ENCODE measurements at regions of chr14 and their contacts with region 1.

Region 1: GRCh38 chr14:73728717-73729330 is 14.6 kb upstream of the PNMA1 start:
- DNase-seq: peak; percentile 66 to 87
- H3K4me3 ChIP-seq: no peak overlapping the region
- H3K27ac ChIP-seq: 0 out of 2 replicates have a peak overlapping the region, but pooled peaks have one; percentile 30
- H3K4me1 ChIP-seq: peaks cover 56% of the 10 kb centered on the region
- H3K27me3 ChIP-seq: no peaks in the 10 kb centered on the region
- CTCF ChIP-seq: peak; percentile 94

Region 2: GRCh38 chr14:73173092-73173735 is 555.6 kb before region 1 on chr14:
- CTCF ChIA-PET with region 1: no interaction called
- POLR2A ChIA-PET with region 1: no interaction called
- intact Hi-C with region 1: loop called (anchors 5 kb)
- DNase-seq: no peak
- H3K4me3 ChIP-seq: no peak overlapping the region
- H3K27ac ChIP-seq: no peak overlapping the region
- H3K4me1 ChIP-seq: no peaks in the 10 kb centered on the region
- H3K27me3 ChIP-seq: no peaks in the 10 kb centered on the region
- CTCF ChIP-seq: peak; percentile 70

Region 3: GRCh38 chr14:73524493-73524892 is 204.3 kb before region 1 on chr14:
- CTCF ChIA-PET with region 1: no interaction called
- POLR2A ChIA-PET with region 1: no interaction called
- intact Hi-C with region 1: no loop called
- DNase-seq: no peak
- H3K4me3 ChIP-seq: no peak overlapping the region
- H3K27ac ChIP-seq: no peak overlapping the region
- H3K4me1 ChIP-seq: peaks cover 12% of the 10 kb centered on the region
- H3K27me3 ChIP-seq: no peaks in the 10 kb centered on the region
- CTCF ChIP-seq: no peak

Region 4: GRCh38 chr14:73564889-73565288 is 163.9 kb before region 1 on chr14:
- CTCF ChIA-PET with region 1: no interaction called
- POLR2A ChIA-PET with region 1: no interaction called
- intact Hi-C with region 1: no loop called
- DNase-seq: no peak
- H3K4me3 ChIP-seq: no peak overlapping the region
- H3K27ac ChIP-seq: no peak overlapping the region
- H3K4me1 ChIP-seq: peaks cover 21% of the 10 kb centered on the region
- H3K27me3 ChIP-seq: no peaks in the 10 kb centered on the region
- CTCF ChIP-seq: no peak

Region 5: DNA sequence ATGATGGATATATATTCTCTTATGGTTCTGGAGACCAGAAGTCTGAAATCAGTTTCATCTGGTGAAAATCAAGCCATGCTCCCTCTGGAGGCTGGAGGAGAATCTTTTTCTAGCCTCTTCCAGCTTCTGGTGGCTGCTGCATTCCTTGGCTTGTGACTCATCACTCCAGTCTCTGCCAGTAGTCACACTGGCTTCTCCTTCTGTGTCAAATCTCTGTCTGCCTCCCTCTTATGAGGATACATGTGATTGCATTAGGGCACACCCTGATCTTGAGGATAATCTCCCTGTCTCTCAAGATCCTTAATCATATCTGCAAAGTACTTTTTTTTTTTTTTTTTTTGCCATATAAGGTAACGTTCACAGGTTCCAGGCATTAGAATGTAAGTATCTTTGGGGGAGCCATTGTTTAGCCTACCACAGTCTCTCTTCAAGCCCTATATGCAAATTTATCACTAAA is 66.3 kb before region 1 on chr14:
- CTCF ChIA-PET with region 1: interaction called, 5 read pairs
- POLR2A ChIA-PET with region 1: no interaction called
- intact Hi-C with region 1: loop called (anchors 2 kb)
- DNase-seq: peak; percentile 66 to 93
- H3K4me3 ChIP-seq: no peak overlapping the region
- H3K27ac ChIP-seq: 0 out of 2 replicates have a peak overlapping the region, but pooled peaks have one; percentile 21
- H3K4me1 ChIP-seq: peaks cover 22% of the 10 kb centered on the region
- H3K27me3 ChIP-seq: no peaks in the 10 kb centered on the region
- CTCF ChIP-seq: peak; percentile 64

Region 6: GRCh38 chr14:73695997-73696396 is 32.8 kb before region 1 on chr14:
- CTCF ChIA-PET with region 1: no interaction called
- POLR2A ChIA-PET with region 1: no interaction called
- intact Hi-C with region 1: no loop called
- DNase-seq: no peak
- H3K4me3 ChIP-seq: no peak overlapping the region
- H3K27ac ChIP-seq: peak overlapping the region; percentile 83
- H3K4me1 ChIP-seq: peaks cover 30% of the 10 kb centered on the region
- H3K27me3 ChIP-seq: no peaks in the 10 kb centered on the region
- CTCF ChIP-seq: no peak

Region 7: GRCh38 chr14:73759714-73760597 is 31.1 kb after region 1 on chr14:
- CTCF ChIA-PET with region 1: interaction called, 12 read pairs
- POLR2A ChIA-PET with region 1: interaction called, 34 read pairs
- intact Hi-C with region 1: loop called (anchors 1 kb)
- DNase-seq: peak; percentile 96
- H3K4me3 ChIP-seq: peak overlapping the region; percentile 90
- H3K27ac ChIP-seq: peak overlapping the region; percentile 76
- H3K4me1 ChIP-seq: peaks cover 54% of the 10 kb centered on the region
- H3K27me3 ChIP-seq: no peaks in the 10 kb centered on the region
- CTCF ChIP-seq: no peak

Region 8: DNA sequence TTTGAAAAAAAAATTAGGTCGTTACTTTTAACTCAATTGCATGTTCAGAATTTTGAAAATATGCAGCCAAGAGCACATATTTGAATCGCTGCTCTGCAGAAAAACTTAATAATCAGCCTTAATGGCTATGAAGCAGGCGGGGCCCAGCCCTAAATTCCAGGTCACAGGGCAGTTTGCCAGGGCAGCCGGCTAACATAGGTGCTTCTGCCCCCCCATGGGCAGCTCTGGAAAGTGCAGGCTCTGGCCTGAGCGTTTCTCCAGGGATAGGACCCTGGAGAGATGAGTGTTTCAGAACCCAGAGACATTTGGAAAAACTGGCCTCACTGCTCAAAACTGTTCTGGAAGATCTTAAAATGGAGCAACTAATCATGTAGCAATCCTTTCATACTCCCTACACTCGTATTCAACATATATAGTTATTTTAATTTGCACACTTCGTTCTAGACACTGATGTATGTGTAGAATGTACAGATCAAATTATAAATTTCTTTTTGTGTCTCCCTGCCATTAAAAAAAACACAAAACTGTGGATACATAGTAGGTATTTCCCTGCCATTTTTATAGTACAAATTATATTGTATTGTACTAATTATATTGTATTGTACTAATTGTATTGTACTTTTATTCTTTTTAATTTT is 96.8 kb after region 1 on chr14:
- CTCF ChIA-PET with region 1: interaction called, 3 read pairs
- POLR2A ChIA-PET with region 1: no interaction called
- intact Hi-C with region 1: loop called (anchors 1 kb)
- DNase-seq: peak; percentile 68 to 86
- H3K4me3 ChIP-seq: no peak overlapping the region
- H3K27ac ChIP-seq: no peak overlapping the region
- H3K4me1 ChIP-seq: peaks cover 33% of the 10 kb centered on the region
- H3K27me3 ChIP-seq: no peaks in the 10 kb centered on the region
- CTCF ChIP-seq: peak; percentile 85

Region 9: DNA sequence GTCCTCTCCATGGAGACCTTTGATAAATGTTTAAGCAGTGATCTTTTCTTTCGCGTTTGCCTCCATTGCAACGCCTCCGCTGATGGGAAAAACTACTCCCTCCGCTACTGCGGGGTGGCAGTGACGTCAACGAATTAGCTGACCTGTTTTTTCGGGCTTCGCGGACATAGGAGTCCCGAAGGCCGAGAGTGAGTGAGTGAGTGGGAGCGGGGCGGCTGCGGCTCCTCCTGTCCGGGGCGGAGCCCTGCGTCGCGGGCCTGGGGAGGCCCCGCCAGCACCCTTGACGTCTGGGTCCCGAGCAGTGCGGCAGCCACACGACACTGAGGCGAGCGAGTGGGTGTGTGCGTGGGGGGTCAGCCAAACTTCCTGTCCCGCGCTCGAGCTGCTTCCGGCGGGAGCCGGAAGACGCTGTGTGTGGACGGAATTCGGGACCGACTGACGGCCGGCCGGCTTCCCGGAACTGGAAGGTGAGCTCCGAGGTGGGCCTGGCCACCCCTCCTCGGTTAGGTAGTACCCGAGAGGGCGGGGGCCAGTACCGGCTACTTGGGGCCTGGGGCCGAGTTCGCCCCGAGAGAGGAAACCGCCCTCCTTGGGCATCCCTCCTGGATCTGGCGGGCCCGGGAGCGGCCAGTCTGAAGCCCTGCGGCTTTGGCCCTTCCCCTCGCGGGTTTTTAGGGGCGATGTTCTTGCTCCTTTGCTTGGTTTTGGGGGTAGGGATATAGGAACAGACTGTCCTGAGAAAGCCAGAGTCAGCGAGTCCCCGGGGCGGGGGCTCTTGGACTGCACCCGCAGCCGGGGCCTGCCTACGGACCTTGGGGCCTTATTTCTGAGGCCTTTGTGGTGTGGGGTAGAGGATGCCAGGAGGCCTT is 157.9 kb after region 1 on chr14 and contains the start of gene ZNF410:
- CTCF ChIA-PET with region 1: interaction called, 3 read pairs
- POLR2A ChIA-PET with region 1: interaction called, 4 read pairs
- intact Hi-C with region 1: loop called (anchors 2 kb)
- DNase-seq: peak; percentile 85 to 91
- H3K4me3 ChIP-seq: peak within 1 kb of the TSS; percentile 91
- H3K27ac ChIP-seq: peak within 1 kb of the TSS; percentile 70
- H3K4me1 ChIP-seq: peaks cover 32% of the 10 kb centered on the region
- H3K27me3 ChIP-seq: no peaks in the 10 kb centered on the region
- CTCF ChIP-seq: no peak
- total RNA-seq, gene ZNF410: 38.6 and 40.2 TPM in 2 replicates